ENCODE measurements at regions of chr9 and their contacts with region 1.

Region 1: DNA sequence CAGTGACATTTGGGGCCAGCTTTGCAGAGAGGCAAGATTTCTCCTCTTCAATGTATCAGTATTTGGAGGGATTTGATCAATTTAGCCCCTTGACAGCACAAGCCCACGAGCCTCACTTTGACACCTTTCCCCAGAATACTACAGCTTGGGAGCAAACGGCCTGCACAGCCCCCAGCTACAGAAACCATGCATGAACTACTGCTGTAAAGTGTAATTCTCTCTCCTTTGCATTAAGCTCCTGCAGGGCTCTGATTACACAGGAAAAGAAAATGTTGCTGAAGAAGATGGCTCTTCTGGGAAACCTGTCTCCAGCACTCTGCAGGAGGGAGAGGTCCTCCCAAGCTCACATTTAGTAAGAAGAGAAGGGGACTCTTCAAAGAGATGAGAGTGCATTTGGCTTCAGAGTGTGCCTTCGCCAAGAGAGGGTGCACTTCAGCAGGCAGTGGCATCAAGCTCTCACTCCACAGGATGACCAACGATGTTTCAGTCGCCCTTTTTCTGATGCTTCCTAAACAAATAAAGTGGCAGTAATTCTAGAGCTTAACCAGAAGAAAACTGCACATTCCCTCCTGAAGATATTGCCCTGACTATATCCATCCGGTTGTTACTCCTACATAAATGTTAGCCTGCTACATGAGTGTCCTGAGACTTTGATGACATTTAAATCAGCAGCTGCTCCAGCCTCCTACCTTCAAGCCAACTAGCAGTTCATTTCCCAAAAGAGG is 272.2 kb downstream of the AUH start:
- DNase-seq: peak; percentile 67
- H3K4me3 Mint-ChIP-seq: no peak overlapping the region
- H3K27ac Mint-ChIP-seq: peak overlapping the region; percentile 12
- H3K4me1 Mint-ChIP-seq: peaks cover 21% of the 10 kb centered on the region
- H3K27me3 Mint-ChIP-seq: no peaks in the 10 kb centered on the region
- CTCF ChIP-seq: peak; percentile 51

Region 2: DNA sequence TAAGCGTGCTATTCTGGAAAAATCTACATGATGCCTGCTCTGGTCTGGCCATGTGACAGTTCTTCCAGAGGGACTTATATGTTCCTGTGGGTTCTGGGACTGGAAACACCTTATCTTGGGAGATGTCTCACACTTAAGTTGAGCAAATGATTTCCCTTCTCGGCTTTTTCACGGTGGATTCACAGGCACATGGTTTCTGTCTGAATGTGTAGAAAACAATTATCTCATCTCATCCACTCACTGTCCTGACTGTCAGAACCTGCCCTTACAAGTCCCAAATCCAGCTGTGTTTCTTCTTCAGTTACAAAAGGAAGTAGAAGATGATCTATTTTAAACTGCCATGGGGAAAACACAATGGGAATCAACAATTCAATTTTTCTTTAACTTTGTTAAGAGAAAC is 103.9 kb before region 1 on chr9:
- CTCF ChIA-PET with region 1: no interaction called
- POLR2A ChIA-PET with region 1: no interaction called
- intact Hi-C with region 1: loop called (anchors 1 kb)
- DNase-seq: no peak
- H3K4me3 Mint-ChIP-seq: no peak overlapping the region
- H3K27ac Mint-ChIP-seq: peak overlapping the region; percentile 89
- H3K4me1 Mint-ChIP-seq: peaks cover 38% of the 10 kb centered on the region
- H3K27me3 Mint-ChIP-seq: no peaks in the 10 kb centered on the region
- CTCF ChIP-seq: no peak

Region 3: DNA sequence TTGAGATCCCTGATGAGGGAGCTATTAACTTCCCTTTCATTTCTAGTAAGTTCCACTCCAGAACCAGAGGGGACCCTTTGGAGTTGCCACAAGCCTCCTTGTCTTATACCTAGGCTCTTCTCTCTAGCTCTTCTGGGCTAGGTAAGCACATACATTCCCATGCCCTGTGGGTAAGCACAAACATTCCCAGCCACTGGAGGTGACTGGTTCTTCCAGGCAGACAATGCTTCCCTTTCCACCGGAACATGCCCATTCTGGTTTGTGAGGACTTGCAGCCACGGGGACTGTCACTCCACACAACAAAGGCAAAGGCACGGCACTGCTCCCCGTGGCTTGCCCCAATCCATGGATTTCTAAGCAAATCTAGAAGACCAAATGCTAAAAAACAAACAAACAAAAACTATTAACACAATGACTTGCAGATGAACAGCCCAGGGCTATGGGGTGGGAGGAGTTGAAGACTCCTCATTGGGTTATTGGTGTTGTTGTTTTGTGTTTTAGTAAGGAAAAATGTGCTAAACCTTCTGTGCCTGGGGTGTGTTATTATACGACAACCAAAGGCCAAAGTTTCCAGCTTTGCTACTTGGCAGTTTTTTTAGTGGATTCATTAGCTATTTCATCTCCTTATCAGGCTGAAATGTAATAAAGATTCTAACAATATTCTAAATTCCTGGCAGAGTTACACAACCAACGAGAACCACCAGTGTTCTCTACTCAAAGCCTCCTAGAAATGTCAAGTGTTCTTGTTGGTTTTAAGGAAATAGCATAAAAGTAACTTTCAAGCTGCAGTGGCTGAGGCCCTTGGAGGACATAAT is 11.7 kb before region 1 on chr9:
- CTCF ChIA-PET with region 1: interaction called, 10 read pairs
- POLR2A ChIA-PET with region 1: no interaction called
- intact Hi-C with region 1: no loop called
- DNase-seq: no peak
- H3K4me3 Mint-ChIP-seq: no peak overlapping the region
- H3K27ac Mint-ChIP-seq: no peak overlapping the region
- H3K4me1 Mint-ChIP-seq: peaks cover 8% of the 10 kb centered on the region
- H3K27me3 Mint-ChIP-seq: no peaks in the 10 kb centered on the region
- CTCF ChIP-seq: no peak

Region 4: GRCh38 chr9:91100878-91101450 is 11.4 kb after region 1 on chr9:
- CTCF ChIA-PET with region 1: interaction called, 14 read pairs
- POLR2A ChIA-PET with region 1: interaction called, 9 read pairs
- intact Hi-C with region 1: no loop called
- DNase-seq: peak; percentile 31
- H3K4me3 Mint-ChIP-seq: peak overlapping the region; percentile 38
- H3K27ac Mint-ChIP-seq: peak overlapping the region; percentile 43
- H3K4me1 Mint-ChIP-seq: peaks cover 34% of the 10 kb centered on the region
- H3K27me3 Mint-ChIP-seq: no peaks in the 10 kb centered on the region
- CTCF ChIP-seq: no peak

Region 5: DNA sequence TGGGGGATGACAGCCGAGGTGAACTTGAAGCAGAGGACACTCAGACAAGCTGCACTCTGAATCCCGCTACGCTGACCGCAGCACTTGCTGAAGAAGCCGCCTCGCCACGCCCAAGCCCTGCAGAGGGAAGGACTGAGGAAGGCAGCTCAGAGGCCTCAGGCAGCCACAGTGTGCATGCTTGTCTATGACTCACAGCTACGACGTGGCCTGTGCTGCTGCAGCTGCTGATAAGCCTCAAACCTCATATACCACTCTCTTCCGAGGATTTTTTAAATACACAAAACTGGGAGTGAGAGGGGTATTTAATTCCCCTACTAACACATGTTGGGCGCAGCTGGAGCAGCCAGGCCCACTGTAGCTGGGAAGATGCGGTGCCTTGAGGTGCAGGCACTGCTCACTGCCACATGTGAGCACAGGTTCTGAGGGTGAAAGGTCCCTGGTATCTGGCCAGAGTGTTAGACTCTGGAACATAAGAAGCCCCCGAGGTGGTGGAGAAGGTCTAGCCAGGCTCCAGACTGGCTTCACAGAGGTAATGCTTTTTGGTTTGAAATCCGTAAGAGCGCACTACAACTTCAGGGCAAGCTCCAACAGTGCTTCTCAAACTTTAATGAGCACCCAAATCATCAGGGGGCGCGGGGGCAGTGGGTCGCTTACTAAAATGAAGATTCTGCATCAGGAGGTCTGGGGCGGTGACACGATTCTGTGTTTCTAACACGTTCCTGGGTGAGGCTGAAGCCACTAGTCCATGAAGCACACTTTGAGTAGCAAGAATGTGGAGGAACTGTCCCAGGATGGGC is 75.4 kb after region 1 on chr9:
- CTCF ChIA-PET with region 1: no interaction called
- POLR2A ChIA-PET with region 1: no interaction called
- intact Hi-C with region 1: no loop called
- DNase-seq: peak; percentile 94
- H3K4me3 Mint-ChIP-seq: peak overlapping the region; percentile 6
- H3K27ac Mint-ChIP-seq: peak overlapping the region; percentile 57
- H3K4me1 Mint-ChIP-seq: peaks cover 30% of the 10 kb centered on the region
- H3K27me3 Mint-ChIP-seq: no peaks in the 10 kb centered on the region
- CTCF ChIP-seq: no peak

Region 6: DNA sequence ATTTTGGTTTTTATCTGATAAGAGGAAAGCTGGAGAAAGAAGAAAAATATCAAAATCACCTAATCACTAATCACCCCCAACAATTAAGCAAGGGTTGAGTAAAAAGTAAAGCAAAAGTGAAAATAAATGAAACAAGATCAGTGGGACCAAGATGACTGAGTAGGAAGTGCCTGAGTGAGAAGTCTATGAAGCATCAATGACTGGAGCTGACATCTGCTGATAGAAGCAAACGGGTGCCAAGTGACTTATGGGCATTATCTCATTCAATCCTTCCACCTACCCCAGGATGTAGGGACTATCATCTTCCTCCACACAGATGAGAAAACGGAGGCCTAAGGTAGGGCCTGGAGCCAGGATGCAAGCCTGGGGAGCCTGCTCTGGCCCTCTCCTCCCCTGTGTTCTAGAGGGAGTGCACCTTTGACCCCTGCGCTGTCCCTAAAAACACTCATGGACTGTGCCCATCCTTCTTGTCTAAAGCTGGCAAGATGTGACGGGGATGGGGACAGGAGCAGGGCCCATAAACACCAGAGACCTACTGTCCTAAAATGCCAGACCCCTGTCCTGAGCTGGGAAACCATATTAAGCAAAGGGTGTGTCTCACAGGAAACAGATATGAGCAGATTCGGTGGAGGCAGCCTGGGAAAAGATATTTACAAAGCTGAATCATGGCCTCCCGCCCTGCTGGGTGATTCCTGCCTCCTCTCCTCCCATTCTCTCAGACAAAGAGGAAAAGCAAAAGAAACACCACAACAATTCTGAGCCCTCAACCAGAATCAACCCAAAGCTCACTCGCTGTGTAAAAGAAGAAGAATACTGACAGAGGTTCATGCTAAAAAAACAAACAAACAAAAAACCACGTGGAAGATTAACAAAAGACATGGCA is 156.1 kb after region 1 on chr9:
- CTCF ChIA-PET with region 1: interaction called, 5 read pairs
- POLR2A ChIA-PET with region 1: no interaction called
- intact Hi-C with region 1: loop called (anchors 5 kb)
- DNase-seq: peak; percentile 16
- H3K4me3 Mint-ChIP-seq: no peak overlapping the region
- H3K27ac Mint-ChIP-seq: peak overlapping the region; percentile 72
- H3K4me1 Mint-ChIP-seq: peaks cover 13% of the 10 kb centered on the region
- H3K27me3 Mint-ChIP-seq: no peaks in the 10 kb centered on the region
- CTCF ChIP-seq: no peak

Region 7: DNA sequence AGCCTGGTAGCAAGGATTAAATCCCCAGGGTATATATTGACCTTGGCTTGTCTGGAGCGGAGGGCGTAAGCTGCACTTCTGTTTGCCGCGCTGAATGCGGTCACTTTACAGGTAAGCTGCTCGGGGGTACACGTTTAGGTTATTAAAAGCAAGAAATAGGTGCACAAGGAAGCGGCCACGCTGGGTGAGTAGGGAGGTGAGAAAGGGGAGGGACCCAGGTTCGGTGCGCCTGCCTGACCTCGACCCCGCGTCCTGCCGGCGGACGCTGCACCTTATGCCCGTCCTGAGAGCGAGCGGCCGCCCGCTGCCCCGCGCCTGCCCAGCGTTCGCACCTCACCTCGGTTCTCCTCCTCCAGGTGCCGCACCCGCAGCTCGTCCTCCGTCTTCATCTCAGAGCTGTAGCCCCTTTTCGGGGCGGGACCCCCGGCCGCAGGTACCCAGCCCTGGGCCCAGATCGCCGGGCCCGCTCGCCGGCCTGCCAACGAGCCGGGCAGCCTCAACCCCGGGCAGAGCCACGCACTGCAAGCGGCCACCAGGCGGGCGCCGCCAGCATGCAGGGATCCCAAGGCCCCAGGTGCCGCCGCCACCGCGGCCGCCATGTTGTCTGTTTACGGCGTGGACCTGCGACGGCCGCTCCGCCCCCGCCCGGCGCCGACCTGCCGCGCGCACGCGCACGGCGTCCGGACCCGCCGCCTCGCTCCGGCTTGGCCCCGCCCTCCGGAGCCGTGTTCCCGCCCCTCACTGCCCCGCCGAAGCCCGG is 271.9 kb after region 1 on chr9 and contains the start of gene AUH:
- CTCF ChIA-PET with region 1: interaction called, 4 read pairs
- POLR2A ChIA-PET with region 1: interaction called, 7 read pairs
- intact Hi-C with region 1: loop called (anchors 1 kb)
- DNase-seq: peak; percentile 75
- H3K4me3 Mint-ChIP-seq: peak within 1 kb of the TSS; percentile 93
- H3K27ac Mint-ChIP-seq: peak within 1 kb of the TSS; percentile 98
- H3K4me1 Mint-ChIP-seq: peaks cover 38% of the 10 kb centered on the region
- H3K27me3 Mint-ChIP-seq: no peaks in the 10 kb centered on the region
- CTCF ChIP-seq: no peak
- total RNA-seq, gene AUH: 16.1 and 20.9 TPM in 2 replicates

Region 8: GRCh38 chr9:91727316-91727861 is 637.8 kb after region 1 on chr9:
- CTCF ChIA-PET with region 1: no interaction called
- POLR2A ChIA-PET with region 1: no interaction called
- intact Hi-C with region 1: loop called (anchors 10 kb)
- DNase-seq: peak; percentile 62
- H3K4me3 Mint-ChIP-seq: no peak overlapping the region
- H3K27ac Mint-ChIP-seq: no peak overlapping the region
- H3K4me1 Mint-ChIP-seq: peaks cover 14% of the 10 kb centered on the region
- H3K27me3 Mint-ChIP-seq: no peaks in the 10 kb centered on the region
- CTCF ChIP-seq: peak; percentile 63